Activated CD4-positive, alpha-beta T cell treated with anti-CD3 and anti-CD28 coated beads for 36 hours (primary cell): ENCODE measurements at regions of chr12 and their contacts with region 1.

Region 1: GRCh38 chr12:107131832-107132616 is 38.7 kb upstream of the CRY1 start:
- DNase-seq: peak; percentile 10
- ATAC-seq: peak; percentile 36
- H3K4me3 Mint-ChIP-seq: no peak overlapping the region
- H3K27ac Mint-ChIP-seq: no peak overlapping the region
- H3K4me1 Mint-ChIP-seq: no peaks in the 10 kb centered on the region
- H3K27me3 Mint-ChIP-seq: no peaks in the 10 kb centered on the region

Region 2: DNA sequence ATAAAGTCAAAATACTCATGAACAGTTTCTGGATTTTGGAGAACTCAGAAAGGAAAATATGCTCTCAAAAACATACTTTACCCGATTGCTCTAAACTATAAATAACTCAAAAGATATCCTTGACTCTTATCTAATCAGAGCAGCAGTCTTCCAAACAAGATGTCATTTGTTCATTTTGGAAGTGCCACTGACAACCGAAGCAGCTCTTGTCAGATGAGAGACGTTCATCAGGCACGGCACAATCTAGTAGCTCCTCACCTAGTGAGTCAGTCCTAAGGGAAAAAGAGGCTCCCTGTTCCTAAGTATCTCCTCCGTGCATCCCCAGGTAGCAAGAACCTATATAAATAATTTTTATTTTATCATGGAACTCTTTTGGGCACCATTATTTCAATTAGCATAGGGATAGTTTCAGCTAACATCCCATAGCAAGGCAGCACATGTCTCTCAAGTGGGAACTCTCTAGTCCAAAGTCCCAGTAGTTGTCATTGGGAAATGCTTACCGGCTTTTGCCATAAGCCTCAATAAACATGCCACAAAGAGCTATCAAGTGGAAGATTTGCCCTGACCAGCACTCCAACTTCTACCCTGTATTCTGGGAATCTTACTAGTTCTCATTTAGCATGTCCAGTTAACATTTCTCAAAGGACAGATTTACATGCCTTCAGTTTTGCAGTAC is 190.4 kb before region 1 on chr12:
- CTCF ChIA-PET with region 1: no interaction called
- POLR2A ChIA-PET with region 1: no interaction called
- intact Hi-C with region 1: no loop called
- DNase-seq: no peak
- ATAC-seq: no peak
- H3K4me3 Mint-ChIP-seq: no peak overlapping the region
- H3K27ac Mint-ChIP-seq: no peak overlapping the region
- H3K4me1 Mint-ChIP-seq: no peaks in the 10 kb centered on the region
- H3K27me3 Mint-ChIP-seq: no peaks in the 10 kb centered on the region

Region 3: DNA sequence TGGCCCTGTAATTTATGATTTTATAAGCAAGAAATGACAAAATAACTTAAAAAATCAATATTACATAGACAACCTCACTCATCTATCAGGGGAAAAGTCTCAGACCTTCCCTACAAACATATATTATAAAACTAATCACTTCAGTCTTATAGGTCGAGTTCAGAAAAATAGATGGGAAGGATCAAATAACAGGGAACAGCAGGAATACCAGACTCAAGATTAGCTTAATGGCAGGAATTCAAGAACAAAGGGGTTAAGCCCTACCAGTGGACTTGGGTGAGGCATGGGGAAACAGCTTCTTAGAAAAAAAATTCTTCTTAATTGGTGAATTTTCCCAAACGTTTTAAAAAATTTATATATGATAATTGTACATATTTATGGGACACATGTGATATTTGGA is 13.0 kb after region 1 on chr12:
- CTCF ChIA-PET with region 1: interaction called, 20 read pairs
- POLR2A ChIA-PET with region 1: no interaction called
- intact Hi-C with region 1: no loop called
- DNase-seq: no peak
- ATAC-seq: no peak
- H3K4me3 Mint-ChIP-seq: no peak overlapping the region
- H3K27ac Mint-ChIP-seq: no peak overlapping the region
- H3K4me1 Mint-ChIP-seq: no peaks in the 10 kb centered on the region
- H3K27me3 Mint-ChIP-seq: peaks cover 3% of the 10 kb centered on the region

Region 4: DNA sequence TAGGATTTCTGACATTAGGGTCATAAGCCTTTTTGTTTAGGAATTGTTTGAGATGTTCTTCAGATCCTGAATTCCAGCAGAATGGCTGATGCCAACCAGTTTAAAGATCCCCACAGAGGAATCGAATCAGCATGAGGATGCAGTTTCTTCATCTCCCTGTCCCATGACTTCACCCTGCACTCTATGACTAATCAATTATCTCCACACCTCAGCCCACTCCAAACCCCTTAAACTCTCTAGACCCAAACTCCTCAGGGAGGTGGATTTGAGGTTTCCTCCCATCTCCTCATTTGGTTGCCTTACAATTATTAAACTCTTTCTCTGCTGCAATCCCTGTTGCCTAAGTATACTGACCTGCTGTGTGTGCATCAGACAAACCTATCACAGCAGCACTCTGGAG is 47.8 kb after region 1 on chr12:
- CTCF ChIA-PET with region 1: no interaction called
- POLR2A ChIA-PET with region 1: no interaction called
- intact Hi-C with region 1: no loop called
- DNase-seq: no peak
- ATAC-seq: no peak
- H3K4me3 Mint-ChIP-seq: no peak overlapping the region
- H3K27ac Mint-ChIP-seq: no peak overlapping the region
- H3K4me1 Mint-ChIP-seq: peaks cover 6% of the 10 kb centered on the region
- H3K27me3 Mint-ChIP-seq: peaks cover 5% of the 10 kb centered on the region

Region 5: GRCh38 chr12:107402041-107403022 is 270.3 kb after region 1 on chr12:
- CTCF ChIA-PET with region 1: interaction called, 39 read pairs
- POLR2A ChIA-PET with region 1: no interaction called
- intact Hi-C with region 1: loop called (anchors 1 kb)
- DNase-seq: peak; percentile 80
- ATAC-seq: peak; percentile 88
- H3K4me3 Mint-ChIP-seq: no peak overlapping the region
- H3K27ac Mint-ChIP-seq: no peak overlapping the region
- H3K4me1 Mint-ChIP-seq: peaks cover 12% of the 10 kb centered on the region
- H3K27me3 Mint-ChIP-seq: no peaks in the 10 kb centered on the region

Region 6: GRCh38 chr12:107597695-107598410 is 465.8 kb after region 1 on chr12:
- CTCF ChIA-PET with region 1: interaction called, 10 read pairs
- POLR2A ChIA-PET with region 1: no interaction called
- intact Hi-C with region 1: no loop called
- DNase-seq: no peak
- ATAC-seq: no peak
- H3K4me3 Mint-ChIP-seq: no peak overlapping the region
- H3K27ac Mint-ChIP-seq: no peak overlapping the region
- H3K4me1 Mint-ChIP-seq: no peaks in the 10 kb centered on the region
- H3K27me3 Mint-ChIP-seq: no peaks in the 10 kb centered on the region

Region 7: GRCh38 chr12:107607464-107608392 is 475.7 kb after region 1 on chr12:
- CTCF ChIA-PET with region 1: interaction called, 171 read pairs
- POLR2A ChIA-PET with region 1: no interaction called
- intact Hi-C with region 1: loop called (anchors 1 kb)
- DNase-seq: peak; percentile 89
- ATAC-seq: peak; percentile 60
- H3K4me3 Mint-ChIP-seq: no peak overlapping the region
- H3K27ac Mint-ChIP-seq: no peak overlapping the region
- H3K4me1 Mint-ChIP-seq: no peaks in the 10 kb centered on the region
- H3K27me3 Mint-ChIP-seq: no peaks in the 10 kb centered on the region

Region 8: DNA sequence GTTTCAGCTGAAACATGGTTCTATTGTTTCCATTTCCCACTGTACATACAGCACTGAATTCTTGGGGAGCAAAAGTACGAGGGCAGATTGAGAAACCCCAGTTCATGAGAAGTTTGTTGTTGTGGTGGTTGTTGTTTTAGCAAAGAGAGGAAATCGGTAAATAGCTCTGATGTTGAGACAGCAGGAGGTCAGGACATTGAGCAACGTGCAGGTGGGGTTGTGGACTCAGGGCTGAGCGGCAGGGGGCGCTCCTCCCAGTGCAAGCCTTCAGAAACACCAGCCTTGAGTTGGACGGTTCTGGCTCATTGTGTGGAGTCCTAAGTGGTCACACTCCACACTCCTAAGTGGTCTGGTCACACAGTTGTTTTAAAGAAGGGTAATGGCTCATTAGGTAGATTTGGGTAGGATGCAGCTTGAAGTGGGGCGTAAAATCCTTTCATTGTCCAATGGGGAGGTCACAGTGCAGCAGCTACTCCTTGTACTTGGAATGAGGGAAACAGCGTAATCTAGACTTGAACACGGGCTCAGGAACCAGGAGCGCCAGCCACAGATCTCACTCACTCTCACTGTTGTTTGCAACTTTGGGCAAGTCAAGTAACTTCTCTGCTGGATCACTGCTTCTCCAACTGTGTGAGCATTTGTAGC is 539.1 kb after region 1 on chr12:
- CTCF ChIA-PET with region 1: interaction called, 6 read pairs
- POLR2A ChIA-PET with region 1: no interaction called
- intact Hi-C with region 1: loop called in 1 of 2 experiments (anchors 5 kb)
- DNase-seq: peak; percentile 73
- ATAC-seq: peak; percentile 79
- H3K4me3 Mint-ChIP-seq: peak overlapping the region; percentile 37
- H3K27ac Mint-ChIP-seq: no peak overlapping the region
- H3K4me1 Mint-ChIP-seq: peaks cover 4% of the 10 kb centered on the region
- H3K27me3 Mint-ChIP-seq: peaks cover 7% of the 10 kb centered on the region

Region 9: GRCh38 chr12:107884769-107885694 is 753.0 kb after region 1 on chr12:
- CTCF ChIA-PET with region 1: no interaction called
- POLR2A ChIA-PET with region 1: no interaction called
- intact Hi-C with region 1: loop called (anchors 10 kb)
- DNase-seq: peak; percentile 71
- ATAC-seq: peak; percentile 76
- H3K4me3 Mint-ChIP-seq: no peak overlapping the region
- H3K27ac Mint-ChIP-seq: no peak overlapping the region
- H3K4me1 Mint-ChIP-seq: no peaks in the 10 kb centered on the region
- H3K27me3 Mint-ChIP-seq: peaks cover 4% of the 10 kb centered on the region